Dorsolateral prefrontal cortex (tissue), 120 donors: ENCODE measurements at regions of chr20 and their contacts with region 1.

Region 1: DNA sequence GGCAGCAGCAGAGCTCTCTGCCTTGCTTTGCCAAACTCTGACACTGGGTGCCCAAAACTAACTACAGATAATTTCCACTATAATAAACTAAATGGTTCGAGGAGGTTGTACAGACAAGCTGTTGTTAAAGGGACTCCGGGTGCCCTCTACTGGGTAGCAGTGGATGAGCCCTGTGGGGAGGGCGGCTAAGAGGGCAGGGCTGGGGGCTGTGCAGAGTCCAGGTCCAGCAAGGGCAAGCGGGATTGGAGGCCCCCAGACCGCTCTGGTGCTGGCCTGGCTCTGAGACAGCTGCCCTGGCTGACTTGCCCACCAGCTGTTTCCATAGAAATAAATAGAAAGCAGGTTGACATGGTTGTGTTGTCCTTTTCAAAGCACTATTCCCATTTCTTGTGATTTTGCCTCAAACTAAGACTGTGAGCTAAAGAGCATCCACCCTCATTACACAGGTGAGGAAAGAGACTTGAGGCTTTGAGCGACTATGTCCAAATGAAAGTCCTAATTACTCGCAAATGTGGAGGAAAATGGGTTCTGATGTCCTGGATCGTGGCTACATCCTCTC is 167.6 kb upstream of the CST7 start:
- DNase-seq: peak; percentile 22 to 73 (median 63)
- H3K4me3 ChIP-seq: peak overlapping the region in 1 of 59 donors; percentile 34
- H3K27ac ChIP-seq: peak overlapping the region in 1 of 59 donors; percentile 25
- H3K27me3 ChIP-seq: no peaks in the 10 kb centered on the region
- CTCF ChIP-seq: peak; percentile 33 to 87 (median 71)

Region 2: DNA sequence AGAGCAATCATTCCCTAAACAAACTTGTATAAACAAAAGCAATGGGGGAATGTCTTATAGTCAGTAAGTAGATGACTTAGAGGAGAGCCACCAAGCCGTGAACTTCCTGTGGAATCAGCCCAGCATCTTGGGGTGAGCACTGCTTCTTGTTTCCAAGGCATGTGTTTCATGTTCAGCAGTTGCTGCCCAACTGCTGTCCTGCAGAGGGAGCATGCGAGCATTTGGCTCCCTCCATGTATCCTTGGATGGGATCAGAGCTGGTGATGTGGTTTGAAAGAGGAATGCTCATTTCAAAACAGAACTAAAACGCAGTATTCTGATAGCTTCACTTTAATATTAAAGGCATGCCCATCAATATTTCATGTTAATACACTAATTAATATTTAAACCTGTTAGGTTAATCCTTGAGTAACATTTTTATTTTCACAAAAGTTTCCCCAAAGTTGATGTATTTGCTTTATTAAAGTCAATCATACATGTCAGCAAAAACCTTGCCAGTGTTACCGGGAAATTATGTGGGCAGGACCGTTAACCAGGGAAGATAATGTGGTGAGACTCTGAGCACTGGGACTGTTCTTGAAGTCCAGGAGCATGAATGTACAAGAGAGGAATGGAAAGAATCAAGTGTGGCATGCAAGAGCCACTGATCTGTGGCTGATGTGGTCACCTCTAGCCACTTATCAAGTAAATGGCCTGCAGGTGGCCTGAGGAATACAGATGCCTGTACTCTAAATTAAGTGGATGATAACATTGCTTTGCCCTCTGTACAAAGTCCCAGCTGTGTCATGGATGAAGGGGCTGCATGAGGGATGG is 620.7 kb before region 1 on chr20:
- intact Hi-C with region 1: loop called (anchors 5 to 10 kb)
- DNase-seq: peak in 9 of 10 donors; percentile 22 to 74 (median 63)
- H3K4me3 ChIP-seq: peak overlapping the region in 1 of 59 donors; percentile 12
- H3K27ac ChIP-seq: no peak overlapping the region
- H3K27me3 ChIP-seq: no peaks in the 10 kb centered on the region
- CTCF ChIP-seq: peak; percentile 35 to 86 (median 78)

Region 3: GRCh38 chr20:24477601-24478547 is 303.6 kb before region 1 on chr20:
- intact Hi-C with region 1: loop called (anchors 5 to 10 kb)
- DNase-seq: peak in 2 of 10 donors; percentile 38 to 41
- H3K4me3 ChIP-seq: peak overlapping the region in 2 of 59 donors; percentile 26 to 27
- H3K27ac ChIP-seq: peak overlapping the region in 47 of 59 donors; percentile 5 to 83 (median 56)
- H3K27me3 ChIP-seq: peaks cover 0 to 3% (median 0%) of the 10 kb centered on the region in 45 donors
- CTCF ChIP-seq: no peak

Region 4: GRCh38 chr20:24699321-24700165 is 82.0 kb before region 1 on chr20:
- intact Hi-C with region 1: loop called in 1 of 2 experiments (anchors 5 kb)
- DNase-seq: peak in 5 of 10 donors; percentile 38 to 72 (median 57)
- H3K4me3 ChIP-seq: peak overlapping the region in 1 of 59 donors; percentile 8
- H3K27ac ChIP-seq: peak overlapping the region in 45 of 59 donors; percentile 3 to 87 (median 64)
- H3K27me3 ChIP-seq: no peaks in the 10 kb centered on the region
- CTCF ChIP-seq: peak in 1 of 56 donors; percentile 6